MCF 10A (cell line): ENCODE measurements at regions of chr5 and their contacts with region 1.

Region 1: DNA sequence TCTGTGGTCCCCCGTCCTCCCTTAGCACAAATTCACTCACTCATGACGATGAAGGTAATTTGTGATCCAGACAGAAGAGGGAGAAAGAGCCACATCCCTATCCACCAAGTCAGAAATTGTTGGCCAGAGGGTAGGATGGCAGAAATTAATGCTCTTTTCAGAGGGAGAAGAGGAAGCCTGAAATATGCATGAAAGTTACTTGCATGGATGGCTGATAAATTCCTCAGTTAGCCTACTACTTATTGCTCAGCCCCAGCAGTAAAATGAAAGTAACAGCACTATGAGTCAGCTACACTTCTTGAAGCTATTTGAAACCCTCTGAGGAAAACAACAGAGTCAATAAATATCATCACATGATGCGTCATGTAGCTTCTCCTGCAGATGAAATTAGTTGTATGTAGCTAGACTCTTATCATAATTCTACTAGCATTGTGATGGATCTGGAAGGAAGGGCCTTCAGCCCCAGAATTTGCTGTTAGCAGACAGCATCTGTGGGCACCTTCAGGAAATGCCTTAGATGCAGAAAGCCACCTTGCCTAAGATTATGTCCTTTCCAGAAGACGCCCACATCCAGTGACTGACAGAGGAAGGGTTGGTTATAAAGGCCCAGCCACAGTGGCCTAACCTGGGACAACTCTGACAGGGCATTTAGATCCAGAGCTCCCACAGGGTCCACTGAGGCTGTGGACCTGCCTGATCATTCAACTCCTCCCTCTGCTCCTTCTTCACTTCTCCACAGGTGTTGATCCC is 81.2 kb upstream of the CCDC112 start:
- DNase-seq: peak; percentile 59
- H3K4me3 Mint-ChIP-seq: peak overlapping the region; percentile 31
- H3K27ac Mint-ChIP-seq: peak overlapping the region; percentile 74
- H3K4me1 Mint-ChIP-seq: peaks cover 21% of the 10 kb centered on the region
- H3K27me3 Mint-ChIP-seq: no peaks in the 10 kb centered on the region
- CTCF ChIP-seq: peak; percentile 35

Region 2: GRCh38 chr5:114883675-114884074 is 494.0 kb before region 1 on chr5:
- CTCF ChIA-PET with region 1: no interaction called
- POLR2A ChIA-PET with region 1: no interaction called
- intact Hi-C with region 1: no loop called
- DNase-seq: no peak
- H3K4me3 Mint-ChIP-seq: no peak overlapping the region
- H3K27ac Mint-ChIP-seq: no peak overlapping the region
- H3K4me1 Mint-ChIP-seq: no peaks in the 10 kb centered on the region
- H3K27me3 Mint-ChIP-seq: no peaks in the 10 kb centered on the region
- CTCF ChIP-seq: no peak

Region 3: DNA sequence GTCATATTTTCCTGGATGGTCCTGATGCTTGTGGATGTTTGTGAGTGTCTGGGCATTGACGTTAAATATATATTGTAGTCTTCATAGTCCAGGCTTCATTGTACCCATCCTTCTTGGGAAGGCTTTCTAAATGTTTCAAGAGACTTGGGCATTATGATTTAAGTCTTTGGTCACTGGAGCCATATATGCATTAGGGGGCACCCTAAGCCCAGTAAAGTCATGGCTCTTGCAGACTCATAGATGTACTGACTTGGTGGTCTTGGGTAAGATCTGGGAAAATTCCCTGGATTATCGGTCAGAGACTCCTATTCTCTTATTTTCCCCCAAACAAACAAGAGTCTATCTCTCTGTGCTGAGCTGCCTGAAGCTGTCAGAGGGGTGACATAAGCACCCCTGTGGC is 479.0 kb before region 1 on chr5:
- CTCF ChIA-PET with region 1: no interaction called
- POLR2A ChIA-PET with region 1: no interaction called
- intact Hi-C with region 1: no loop called
- DNase-seq: no peak
- H3K4me3 Mint-ChIP-seq: no peak overlapping the region
- H3K27ac Mint-ChIP-seq: no peak overlapping the region
- H3K4me1 Mint-ChIP-seq: no peaks in the 10 kb centered on the region
- H3K27me3 Mint-ChIP-seq: no peaks in the 10 kb centered on the region
- CTCF ChIP-seq: no peak

Region 4: GRCh38 chr5:115349020-115349817 is 28.4 kb before region 1 on chr5:
- CTCF ChIA-PET with region 1: interaction called, 9 read pairs
- POLR2A ChIA-PET with region 1: interaction called, 13 read pairs
- intact Hi-C with region 1: no loop called
- DNase-seq: peak; percentile 81
- H3K4me3 Mint-ChIP-seq: peak overlapping the region; percentile 25
- H3K27ac Mint-ChIP-seq: peak overlapping the region; percentile 84
- H3K4me1 Mint-ChIP-seq: peaks cover 25% of the 10 kb centered on the region
- H3K27me3 Mint-ChIP-seq: no peaks in the 10 kb centered on the region
- CTCF ChIP-seq: no peak

Region 5: GRCh38 chr5:115460472-115460871 is 82.8 kb after region 1 on chr5:
- CTCF ChIA-PET with region 1: interaction called, 4 read pairs
- POLR2A ChIA-PET with region 1: interaction called, 10 read pairs
- intact Hi-C with region 1: loop called (anchors 2 kb)
- DNase-seq: peak; percentile 70
- H3K4me3 Mint-ChIP-seq: no peak overlapping the region
- H3K27ac Mint-ChIP-seq: no peak overlapping the region
- H3K4me1 Mint-ChIP-seq: peaks cover 20% of the 10 kb centered on the region
- H3K27me3 Mint-ChIP-seq: no peaks in the 10 kb centered on the region
- CTCF ChIP-seq: no peak

Region 6: GRCh38 chr5:115586601-115587048 is 209.0 kb after region 1 on chr5:
- CTCF ChIA-PET with region 1: interaction called, 6 read pairs
- POLR2A ChIA-PET with region 1: no interaction called
- intact Hi-C with region 1: loop called (anchors 2 kb)
- DNase-seq: peak; percentile 44
- H3K4me3 Mint-ChIP-seq: no peak overlapping the region
- H3K27ac Mint-ChIP-seq: no peak overlapping the region
- H3K4me1 Mint-ChIP-seq: no peaks in the 10 kb centered on the region
- H3K27me3 Mint-ChIP-seq: no peaks in the 10 kb centered on the region
- CTCF ChIP-seq: peak; percentile 45